GM13976 (cell line): ENCODE measurements at regions of chr6 and their contacts with region 1.

Region 1: GRCh38 chr6:41936073-41936837 is 5.4 kb downstream of the CCND3 start:
- DNase-seq: peak; percentile 80
- CTCF ChIP-seq: peak; percentile 70

Region 2: DNA sequence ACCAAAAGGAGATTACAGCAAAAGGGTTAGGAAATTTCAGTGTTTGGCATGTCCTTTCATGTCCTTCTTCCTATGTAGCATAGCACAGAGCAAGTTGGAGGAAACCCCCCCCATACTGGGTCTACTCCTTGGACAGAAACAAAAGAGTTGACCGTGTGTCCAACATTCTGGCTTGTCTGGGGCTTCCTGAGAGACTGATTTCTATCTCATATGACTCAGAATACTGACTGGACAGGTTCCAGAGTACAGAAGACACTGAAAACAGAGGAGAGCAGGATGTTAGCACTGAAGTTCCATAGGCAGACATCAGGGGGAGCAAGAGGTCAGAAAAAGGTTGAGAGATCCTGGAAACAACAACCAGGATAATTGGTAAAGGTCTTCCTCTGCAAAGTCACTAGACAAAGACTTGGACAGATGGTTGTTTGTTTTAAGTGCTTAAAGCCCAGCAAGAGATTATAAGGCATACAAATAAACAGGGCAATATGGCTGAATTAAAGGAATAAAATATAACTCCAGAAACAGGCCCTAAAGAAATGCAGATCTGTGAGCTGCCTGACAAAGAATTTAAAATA is 89.5 kb before region 1 on chr6:
- in situ Hi-C with region 1: loop called (anchors 10 kb)
- DNase-seq: peak; percentile 70
- CTCF ChIP-seq: peak; percentile 51

Region 3: DNA sequence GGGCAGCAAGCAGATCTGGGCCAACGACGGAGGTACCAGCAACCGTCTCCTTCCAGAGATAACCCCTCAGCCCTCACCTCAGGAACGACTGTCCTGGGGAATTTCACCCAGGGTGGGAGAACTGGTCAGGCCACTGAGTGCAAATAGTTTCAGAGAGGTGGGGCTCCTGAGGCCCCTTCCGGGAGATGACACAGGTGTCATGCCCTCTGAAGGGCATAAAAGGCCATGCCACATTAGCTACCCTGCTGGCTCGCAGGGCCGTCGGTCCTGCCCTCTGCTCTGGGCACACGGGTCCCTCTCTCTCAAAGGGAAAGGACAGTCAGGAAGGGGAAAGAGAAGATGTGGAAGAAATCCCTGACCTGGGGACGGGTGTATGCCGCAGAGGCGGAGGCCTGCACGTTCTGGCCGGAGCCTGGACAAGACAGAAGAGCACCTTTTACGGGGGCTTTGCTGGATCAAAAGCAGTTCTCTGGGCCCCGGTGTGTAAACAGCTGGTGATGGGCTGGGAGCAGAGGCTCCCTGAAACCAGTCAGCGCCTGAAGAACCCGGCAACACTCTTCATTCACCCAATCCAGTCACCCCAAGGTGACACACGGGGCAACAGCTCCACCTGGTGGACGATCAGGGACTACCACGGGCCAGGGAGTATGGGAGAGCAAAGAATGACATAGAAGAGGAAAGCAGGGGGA is 107.7 kb after region 1 on chr6:
- in situ Hi-C with region 1: loop called (anchors 5 kb)
- DNase-seq: peak; percentile 86
- CTCF ChIP-seq: peak; percentile 93